ENCODE measurements at regions of chrX and their contacts with region 1.

Region 1: DNA sequence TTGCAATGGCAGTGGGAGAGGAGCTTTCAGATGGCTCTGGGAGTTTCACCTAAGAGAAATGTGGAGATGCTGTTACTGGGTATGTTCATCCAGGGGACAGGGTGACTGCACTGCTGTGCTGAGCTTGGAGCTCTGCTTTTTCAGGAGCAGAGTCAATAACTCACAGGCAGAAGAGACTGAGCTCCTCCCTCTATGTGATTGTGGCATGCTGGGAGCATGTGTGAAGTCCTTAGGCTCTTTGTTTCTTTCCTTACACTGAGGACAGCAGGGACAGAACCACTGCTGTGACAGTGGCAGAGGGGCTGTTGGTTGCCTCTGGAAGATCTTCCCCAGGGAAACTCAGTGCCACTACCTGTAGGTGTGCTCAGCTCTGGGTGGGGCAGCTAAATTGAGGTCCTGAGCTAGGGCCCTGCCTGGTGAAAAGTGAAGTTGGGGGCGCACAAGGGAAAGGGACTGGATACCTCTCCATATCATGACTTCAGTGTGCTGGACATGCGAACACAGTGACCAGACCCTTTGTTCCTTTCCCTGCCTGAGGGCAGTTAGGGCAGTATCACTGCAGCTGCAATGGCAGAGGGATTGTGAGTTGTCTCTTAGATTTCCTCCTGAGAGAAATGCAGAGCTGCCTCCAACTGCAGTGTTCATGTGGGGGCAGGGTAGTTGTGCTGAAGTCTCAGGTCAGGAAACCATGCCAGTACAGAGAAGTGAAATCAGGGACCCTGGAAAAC is 156.7 kb downstream of the TENT5D start:
- DNase-seq: no peak
- ATAC-seq: peak; percentile 77
- H3K4me3 Mint-ChIP-seq: no peak overlapping the region
- H3K27ac Mint-ChIP-seq: no peak overlapping the region
- H3K4me1 Mint-ChIP-seq: peaks cover 10% of the 10 kb centered on the region
- H3K27me3 Mint-ChIP-seq: no peaks in the 10 kb centered on the region; the same call in 1 of the 2 replicates
- CTCF ChIP-seq: no peak

Region 2: DNA sequence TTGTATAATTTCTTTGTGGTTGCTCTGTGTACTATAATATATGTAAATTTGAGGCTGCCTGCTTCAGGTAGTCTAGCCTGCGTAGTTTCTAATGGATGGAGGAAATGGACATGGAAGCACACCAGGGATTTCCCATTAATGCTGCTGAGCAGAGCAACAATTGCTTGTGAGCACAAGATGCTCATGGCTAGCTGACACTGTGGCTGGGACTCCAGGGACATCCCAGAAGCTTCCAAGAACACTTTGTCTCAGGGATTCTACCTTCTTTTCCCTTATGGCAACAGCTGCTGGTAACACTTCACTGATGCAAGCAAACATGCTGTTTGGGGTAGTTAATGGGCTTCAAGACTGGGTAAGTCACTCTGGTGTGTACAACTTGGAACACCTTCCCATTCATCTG is 90.7 kb before region 1 on chrX:
- CTCF ChIA-PET with region 1: no interaction called
- POLR2A ChIA-PET with region 1: no interaction called
- DNase-seq: no peak
- ATAC-seq: no peak
- H3K4me3 Mint-ChIP-seq: no peak overlapping the region
- H3K27ac Mint-ChIP-seq: no peak overlapping the region
- H3K4me1 Mint-ChIP-seq: no peaks in the 10 kb centered on the region
- H3K27me3 Mint-ChIP-seq: no peaks in the 10 kb centered on the region
- CTCF ChIP-seq: no peak

Region 3: GRCh38 chrX:80550722-80551121 is 26.2 kb before region 1 on chrX:
- CTCF ChIA-PET with region 1: interaction called, 10 read pairs
- POLR2A ChIA-PET with region 1: no interaction called
- DNase-seq: peak; percentile 43
- ATAC-seq: peak; percentile 100
- H3K4me3 Mint-ChIP-seq: no peak overlapping the region
- H3K27ac Mint-ChIP-seq: no peak overlapping the region
- H3K4me1 Mint-ChIP-seq: no peaks in the 10 kb centered on the region
- H3K27me3 Mint-ChIP-seq: no peaks in the 10 kb centered on the region
- CTCF ChIP-seq: no peak

Region 4: GRCh38 chrX:80747832-80748231 is 170.9 kb after region 1 on chrX:
- CTCF ChIA-PET with region 1: no interaction called
- POLR2A ChIA-PET with region 1: no interaction called
- DNase-seq: no peak
- ATAC-seq: no peak
- H3K4me3 Mint-ChIP-seq: no peak overlapping the region
- H3K27ac Mint-ChIP-seq: no peak overlapping the region
- H3K4me1 Mint-ChIP-seq: no peaks in the 10 kb centered on the region
- H3K27me3 Mint-ChIP-seq: no peaks in the 10 kb centered on the region
- CTCF ChIP-seq: no peak

Measured in WTC11 (cell line).